Activated B cell treated with CpG ODN at 0.5 μM for 24 hours (primary cell): ENCODE measurements at regions of chr4 and their contacts with region 1.

Region 1: DNA sequence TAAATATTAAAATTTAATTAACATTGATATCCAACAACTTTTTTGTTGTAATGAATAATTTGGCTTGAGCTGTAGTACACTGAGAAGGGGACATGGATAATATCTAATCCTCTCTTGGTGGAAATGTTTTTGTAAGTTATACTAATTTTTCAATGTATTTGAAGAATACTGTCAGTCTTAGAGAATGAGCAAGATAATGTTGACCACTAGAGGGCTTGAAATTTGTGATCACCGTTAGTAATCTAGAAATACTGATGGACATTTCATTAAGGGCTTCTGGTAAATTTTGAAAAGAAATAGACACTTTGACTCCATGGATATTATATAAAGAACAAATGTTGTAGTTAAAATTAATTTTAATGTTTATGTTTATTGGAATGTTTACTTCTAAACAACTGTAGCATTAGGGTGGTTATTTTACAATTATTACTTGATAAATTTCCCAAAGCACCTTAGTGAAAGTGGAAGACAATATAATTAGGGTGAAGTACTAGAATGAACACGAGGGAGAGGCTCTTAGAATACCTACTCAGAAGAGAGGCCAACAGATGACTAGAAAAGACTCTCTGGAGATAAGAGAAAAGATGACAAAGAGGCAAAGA is 20.0 kb upstream of the CAMK2D start:
- DNase-seq: no peak
- ATAC-seq: no peak
- H3K4me3 Mint-ChIP-seq: no peak overlapping the region
- H3K27ac Mint-ChIP-seq: no peak overlapping the region
- H3K4me1 Mint-ChIP-seq: no peaks in the 10 kb centered on the region
- H3K27me3 Mint-ChIP-seq: no peaks in the 10 kb centered on the region
- CTCF ChIP-seq: peak; percentile 76

Region 2: GRCh38 chr4:113434247-113434587 is 347.3 kb before region 1 on chr4:
- CTCF ChIA-PET with region 1: no interaction called
- POLR2A ChIA-PET with region 1: no interaction called
- intact Hi-C with region 1: no loop called
- DNase-seq: no peak
- ATAC-seq: no peak
- H3K4me3 Mint-ChIP-seq: no peak overlapping the region
- H3K27ac Mint-ChIP-seq: no peak overlapping the region
- H3K4me1 Mint-ChIP-seq: no peaks in the 10 kb centered on the region
- H3K27me3 Mint-ChIP-seq: peaks cover 12% of the 10 kb centered on the region
- CTCF ChIP-seq: no peak

Region 3: GRCh38 chr4:113837397-113837796 is 55.9 kb after region 1 on chr4:
- CTCF ChIA-PET with region 1: no interaction called
- POLR2A ChIA-PET with region 1: no interaction called
- intact Hi-C with region 1: loop called (anchors 1 kb)
- DNase-seq: no peak
- ATAC-seq: peak; percentile 98
- H3K4me3 Mint-ChIP-seq: no peak overlapping the region
- H3K27ac Mint-ChIP-seq: peak overlapping the region; percentile 64
- H3K4me1 Mint-ChIP-seq: peaks cover 24% of the 10 kb centered on the region
- H3K27me3 Mint-ChIP-seq: no peaks in the 10 kb centered on the region
- CTCF ChIP-seq: no peak

Region 4: DNA sequence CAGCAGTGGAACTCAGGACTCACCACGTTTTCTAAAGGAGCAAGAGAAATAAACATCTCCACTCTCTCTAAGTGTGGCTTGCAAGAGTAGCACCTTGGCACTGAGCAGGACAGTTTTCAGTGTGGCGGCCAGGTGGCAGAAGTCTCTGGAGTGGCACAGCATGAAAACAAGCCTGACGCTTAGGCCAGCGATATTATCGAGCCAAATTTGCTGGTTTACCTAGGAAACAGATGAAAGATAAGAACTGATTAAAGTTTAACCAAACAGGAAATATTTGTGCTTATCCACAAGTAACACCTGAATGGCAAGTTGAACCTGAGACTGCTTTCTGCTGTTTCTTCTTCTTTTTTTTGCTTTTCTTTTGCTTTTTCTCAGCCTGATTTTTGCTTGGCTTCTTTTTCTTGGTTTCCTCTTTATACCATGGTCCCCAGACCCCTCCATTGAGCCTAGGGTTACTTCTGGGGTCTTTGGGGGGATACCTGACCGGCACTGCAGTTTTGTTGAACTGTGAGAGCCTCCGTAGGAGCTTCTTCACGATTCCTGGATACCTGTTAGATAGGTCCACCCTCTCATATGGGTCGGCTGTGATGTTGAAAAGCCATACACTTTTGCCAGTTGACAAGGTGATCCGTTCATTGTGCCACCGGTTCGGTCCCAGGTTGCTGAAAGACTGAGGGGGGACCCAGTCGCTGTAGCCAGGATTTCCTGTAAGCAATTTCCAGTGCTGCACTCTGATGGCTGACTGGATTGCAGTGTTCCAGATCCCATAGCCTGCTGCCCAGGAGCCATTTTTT is 120.7 kb after region 1 on chr4:
- CTCF ChIA-PET with region 1: no interaction called
- POLR2A ChIA-PET with region 1: no interaction called
- intact Hi-C with region 1: loop called (anchors 2 kb)
- DNase-seq: no peak
- ATAC-seq: no peak
- H3K4me3 Mint-ChIP-seq: no peak overlapping the region
- H3K27ac Mint-ChIP-seq: no peak overlapping the region
- H3K4me1 Mint-ChIP-seq: peaks cover 13% of the 10 kb centered on the region
- H3K27me3 Mint-ChIP-seq: no peaks in the 10 kb centered on the region
- CTCF ChIP-seq: no peak

Region 5: GRCh38 chr4:114076899-114077570 is 295.5 kb after region 1 on chr4:
- CTCF ChIA-PET with region 1: no interaction called
- POLR2A ChIA-PET with region 1: no interaction called
- intact Hi-C with region 1: loop called (anchors 5 kb)
- DNase-seq: no peak
- ATAC-seq: no peak
- H3K4me3 Mint-ChIP-seq: no peak overlapping the region
- H3K27ac Mint-ChIP-seq: no peak overlapping the region
- H3K4me1 Mint-ChIP-seq: no peaks in the 10 kb centered on the region
- H3K27me3 Mint-ChIP-seq: peaks cover 3% of the 10 kb centered on the region
- CTCF ChIP-seq: no peak

Region 6: DNA sequence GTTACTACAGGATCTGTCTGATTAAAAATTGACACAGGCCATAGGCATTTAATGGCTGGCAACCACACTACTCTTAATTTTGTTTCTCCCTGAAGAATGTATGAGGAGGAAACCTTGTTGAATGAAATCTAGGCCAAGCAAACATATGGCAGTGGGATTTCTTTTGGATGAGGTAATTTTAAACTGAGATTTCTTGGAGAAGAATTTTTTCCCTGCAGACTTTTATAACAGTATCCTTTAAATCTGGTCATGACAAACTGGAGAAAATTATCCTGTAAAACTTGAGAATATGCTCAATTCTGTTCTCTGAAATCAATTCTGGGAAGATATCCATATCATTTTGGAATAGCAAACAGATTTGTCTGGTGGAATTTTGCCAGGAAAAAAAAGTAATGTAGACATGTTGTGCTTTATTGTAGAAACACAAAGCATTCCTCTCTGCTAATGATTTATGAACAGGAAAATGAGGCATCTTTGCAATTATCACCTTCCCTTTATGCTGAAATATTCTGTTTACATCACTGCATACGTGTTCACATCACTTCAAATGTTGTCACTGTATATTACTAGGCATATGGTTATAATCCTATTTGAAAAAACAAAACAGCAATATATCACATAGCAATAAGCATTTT is 306.2 kb after region 1 on chr4:
- CTCF ChIA-PET with region 1: no interaction called
- POLR2A ChIA-PET with region 1: no interaction called
- intact Hi-C with region 1: no loop called
- DNase-seq: no peak
- ATAC-seq: no peak
- H3K4me3 Mint-ChIP-seq: no peak overlapping the region
- H3K27ac Mint-ChIP-seq: no peak overlapping the region
- H3K4me1 Mint-ChIP-seq: no peaks in the 10 kb centered on the region
- H3K27me3 Mint-ChIP-seq: peaks cover 14% of the 10 kb centered on the region
- CTCF ChIP-seq: no peak

Region 7: GRCh38 chr4:114386637-114387233 is 605.2 kb after region 1 on chr4:
- CTCF ChIA-PET with region 1: no interaction called
- POLR2A ChIA-PET with region 1: no interaction called
- intact Hi-C with region 1: loop called (anchors 1 kb)
- DNase-seq: no peak
- ATAC-seq: peak; percentile 40
- H3K4me3 Mint-ChIP-seq: no peak overlapping the region
- H3K27ac Mint-ChIP-seq: no peak overlapping the region
- H3K4me1 Mint-ChIP-seq: no peaks in the 10 kb centered on the region
- H3K27me3 Mint-ChIP-seq: peaks cover 16% of the 10 kb centered on the region
- CTCF ChIP-seq: peak; percentile 80

Region 8: GRCh38 chr4:114464726-114465272 is 683.3 kb after region 1 on chr4:
- CTCF ChIA-PET with region 1: no interaction called
- POLR2A ChIA-PET with region 1: no interaction called
- intact Hi-C with region 1: no loop called
- DNase-seq: no peak
- ATAC-seq: no peak
- H3K4me3 Mint-ChIP-seq: no peak overlapping the region
- H3K27ac Mint-ChIP-seq: no peak overlapping the region
- H3K4me1 Mint-ChIP-seq: no peaks in the 10 kb centered on the region
- H3K27me3 Mint-ChIP-seq: peaks cover 21% of the 10 kb centered on the region
- CTCF ChIP-seq: no peak